H1 (cell line): ENCODE measurements at regions of chr7 and their contacts with region 1.

Region 1: GRCh38 chr7:32164346-32164957 is 94.2 kb upstream of the PDE1C start:
- DNase-seq: peak in 1 of 2 experiments; percentile 47
- H3K4me3 ChIP-seq: no peak overlapping the region
- H3K27ac ChIP-seq: no peak overlapping the region
- H3K4me1 ChIP-seq: no peaks in the 10 kb centered on the region
- H3K27me3 ChIP-seq: no peaks in the 10 kb centered on the region
- CTCF ChIP-seq: peak; percentile 29 to 77 (median 64)
- EP300 ChIP-seq: no peak
- POLR2A ChIP-seq: no peak
- RAD21 ChIP-seq: peak; percentile 82

Region 2: GRCh38 chr7:31782411-31782991 is 382.0 kb before region 1 on chr7:
- CTCF ChIA-PET with region 1: interaction called, 15 read pairs
- POLR2A ChIA-PET with region 1: no interaction called
- DNase-seq: no peak
- H3K4me3 ChIP-seq: no peak overlapping the region
- H3K27ac ChIP-seq: no peak overlapping the region
- H3K4me1 ChIP-seq: no peaks in the 10 kb centered on the region
- H3K27me3 ChIP-seq: peaks cover 5 to 38% (median 27%) of the 10 kb centered on the region in 4 experiments
- CTCF ChIP-seq: peak in 2 of 3 experiments; percentile 81 to 83; a peak in 3 of 4 replicates
- EP300 ChIP-seq: no peak
- POLR2A ChIP-seq: no peak
- RAD21 ChIP-seq: peak; percentile 71 to 74

Region 3: DNA sequence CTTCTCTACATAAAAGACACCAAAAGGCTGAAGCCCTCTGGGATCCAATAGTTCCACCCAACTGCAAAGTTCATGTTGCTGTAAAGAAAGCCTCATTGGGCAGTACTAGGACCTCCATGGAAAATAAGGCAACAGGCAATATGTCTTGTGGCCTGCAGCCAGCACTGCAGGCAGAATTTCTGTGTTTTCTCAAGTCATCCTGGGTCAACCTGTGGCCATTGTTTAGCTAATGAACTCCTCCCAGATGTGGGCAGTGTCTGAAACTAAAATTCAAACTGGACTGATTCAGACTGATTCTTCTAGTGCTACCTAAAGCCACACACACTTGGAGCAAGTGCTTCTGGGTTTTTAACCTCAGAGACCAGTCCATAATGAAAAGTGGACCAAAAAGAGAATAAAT is 335.9 kb before region 1 on chr7:
- CTCF ChIA-PET with region 1: interaction called, 10 read pairs
- POLR2A ChIA-PET with region 1: no interaction called
- DNase-seq: no peak
- H3K4me3 ChIP-seq: no peak overlapping the region
- H3K27ac ChIP-seq: no peak overlapping the region
- H3K4me1 ChIP-seq: peaks cover 0 to 5% (median 0%) of the 10 kb centered on the region in 4 experiments; a peak in 1 of 7 replicates
- H3K27me3 ChIP-seq: no peaks in the 10 kb centered on the region
- CTCF ChIP-seq: no peak
- EP300 ChIP-seq: no peak
- POLR2A ChIP-seq: no peak
- RAD21 ChIP-seq: no peak

Region 4: DNA sequence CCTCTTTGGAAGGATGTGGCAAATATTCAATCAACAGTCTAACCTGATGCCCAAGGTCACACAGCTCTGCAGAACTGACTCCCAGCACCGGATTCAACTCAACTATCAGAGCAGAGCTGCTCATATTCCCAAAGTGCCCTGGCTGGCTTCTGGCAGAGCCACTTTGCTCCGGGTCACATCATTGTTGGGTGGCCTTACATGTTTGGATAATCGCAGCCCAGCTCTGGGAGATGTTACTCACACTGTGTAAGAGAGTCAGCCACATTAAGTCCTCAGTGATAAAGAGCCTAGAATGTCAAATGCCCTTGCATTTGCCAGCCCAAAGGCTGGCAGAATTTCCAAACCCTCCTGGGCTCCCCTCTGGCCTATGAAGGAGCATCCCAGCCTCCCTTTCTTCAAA is 14.4 kb before region 1 on chr7:
- CTCF ChIA-PET with region 1: interaction called, 10 read pairs
- POLR2A ChIA-PET with region 1: no interaction called
- DNase-seq: no peak
- H3K4me3 ChIP-seq: no peak overlapping the region
- H3K27ac ChIP-seq: no peak overlapping the region
- H3K4me1 ChIP-seq: no peaks in the 10 kb centered on the region
- H3K27me3 ChIP-seq: no peaks in the 10 kb centered on the region; a peak in 1 of 7 replicates
- CTCF ChIP-seq: no peak
- EP300 ChIP-seq: no peak
- POLR2A ChIP-seq: no peak
- RAD21 ChIP-seq: no peak